Dorsolateral prefrontal cortex (tissue), 120 donors: ENCODE measurements at regions of chr6 and their contacts with region 1.

Region 1: DNA sequence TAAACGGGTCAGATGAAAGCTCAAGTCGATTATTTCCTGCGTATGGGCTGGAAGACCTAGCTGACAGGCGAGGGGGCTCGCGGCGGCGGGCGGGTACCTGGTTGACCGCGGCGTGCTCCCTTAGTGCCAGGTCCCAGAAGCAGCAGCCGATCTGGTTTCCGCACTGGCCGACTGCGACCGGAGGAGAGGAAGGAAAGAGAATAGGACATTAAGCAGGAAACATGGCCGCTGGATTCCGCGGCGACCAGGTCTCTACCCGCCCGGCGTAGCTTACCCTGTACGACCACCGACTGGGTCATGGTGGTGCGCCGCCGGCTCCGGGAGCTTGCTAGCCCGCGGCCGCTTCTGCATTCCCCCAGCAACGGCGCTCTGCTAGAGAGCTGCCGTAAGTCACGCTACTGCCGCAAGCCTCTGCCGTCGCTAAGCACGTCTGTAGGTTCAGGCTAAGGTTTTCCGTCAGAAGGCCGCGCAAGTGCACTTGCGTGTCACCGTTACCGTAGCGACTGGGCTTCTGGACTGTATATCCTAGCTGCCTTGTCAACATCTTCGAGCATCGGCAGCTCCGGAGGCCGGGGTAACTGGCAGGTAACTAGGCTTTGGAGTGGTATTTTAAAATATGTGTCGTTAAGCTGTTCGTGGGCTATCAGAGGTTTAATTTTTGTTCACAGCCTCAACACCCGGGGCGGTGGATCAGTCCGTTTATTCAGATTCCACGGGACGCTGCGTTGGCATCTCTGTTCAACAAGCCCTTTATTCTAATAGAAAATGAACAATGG is at the starts of genes FAM229B and TUBE1:
- DNase-seq: peak; percentile 82 to 98 (median 94)
- H3K4me3 ChIP-seq: peak within 1 kb of the TSS; percentile 55 to 98 (median 85)
- H3K27ac ChIP-seq: peak within 1 kb of the TSS; percentile 31 to 94 (median 87)
- H3K27me3 ChIP-seq: no peaks in the 10 kb centered on the region
- CTCF ChIP-seq: peak in 50 of 56 donors; percentile 15 to 61 (median 38)
- total RNA-seq, gene FAM229B: 33.7 to 84.2 (median 59.9) TPM
- total RNA-seq, gene TUBE1: 28.3 to 69.6 (median 48.6) TPM

Region 2: DNA sequence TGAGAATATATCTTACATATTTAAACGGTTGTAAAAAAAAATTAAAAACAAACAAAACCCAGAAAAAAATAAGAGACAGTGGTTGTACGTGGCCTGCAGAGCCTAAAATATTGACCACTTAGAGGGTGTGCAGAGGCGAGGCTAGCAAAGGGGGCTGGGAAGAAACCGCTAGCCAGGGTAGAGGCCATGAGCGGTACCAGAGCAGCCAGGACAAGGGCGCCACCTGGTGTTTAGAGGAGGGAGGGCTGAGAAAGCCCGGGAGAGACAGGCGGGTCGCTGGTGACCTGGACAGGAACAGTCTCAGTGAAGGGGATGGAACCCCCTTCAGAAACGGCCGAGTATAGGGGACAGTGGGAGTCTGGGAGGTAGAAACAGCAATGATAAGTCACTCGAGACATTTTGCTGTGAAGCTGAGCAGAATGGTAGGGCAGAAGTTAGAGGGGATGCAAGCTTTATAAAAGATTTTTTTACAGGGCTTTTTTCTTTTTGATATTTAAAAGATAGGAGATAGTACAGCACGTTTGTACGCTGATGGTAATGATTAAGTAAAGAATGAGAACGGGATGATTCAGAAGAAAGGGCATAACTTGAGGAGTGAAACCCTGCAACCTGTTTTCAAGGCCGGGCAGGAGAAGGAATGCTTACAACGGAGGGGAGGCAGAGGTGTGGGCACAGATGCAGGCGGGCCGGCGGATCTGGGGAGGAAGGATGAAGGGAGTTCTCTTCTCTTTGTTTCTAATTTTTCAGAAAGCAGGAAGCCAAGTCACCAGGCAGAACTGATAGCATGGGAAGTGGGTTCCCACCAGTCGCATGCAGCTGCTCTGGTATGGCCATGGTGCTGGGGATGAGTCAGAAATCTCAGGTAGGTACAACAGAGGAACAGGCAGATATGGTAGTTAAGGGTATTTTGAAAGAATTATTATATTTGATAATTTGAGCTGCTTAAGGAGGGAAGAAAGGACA is 76.3 kb after region 1 on chr6:
- intact Hi-C with region 1: loop called in 1 of 2 experiments (anchors 5 kb)
- DNase-seq: peak in 8 of 10 donors; percentile 36 to 67 (median 54)
- H3K4me3 ChIP-seq: no peak overlapping the region
- H3K27ac ChIP-seq: no peak overlapping the region
- H3K27me3 ChIP-seq: no peaks in the 10 kb centered on the region
- CTCF ChIP-seq: peak; percentile 30 to 87 (median 66)

Region 3: DNA sequence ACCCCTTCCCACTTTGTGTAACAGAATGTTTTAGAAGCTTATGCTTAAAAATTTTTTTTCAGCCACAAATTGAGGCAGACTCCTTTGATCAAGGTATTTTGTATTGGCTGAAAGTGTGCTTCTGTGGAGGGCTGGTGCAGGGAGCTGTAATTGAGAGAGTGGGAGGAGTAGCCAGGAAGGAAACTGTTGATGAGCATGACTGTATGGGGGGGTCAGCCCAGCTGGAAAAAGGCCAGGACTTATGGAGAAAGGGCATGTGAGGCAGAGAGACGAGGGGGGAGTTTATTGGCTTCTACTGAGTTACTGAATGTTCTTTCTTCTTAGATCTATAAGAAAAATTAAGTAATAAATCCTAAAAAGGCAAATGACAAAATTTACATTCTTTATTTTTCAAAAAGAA is 273.2 kb after region 1 on chr6:
- intact Hi-C with region 1: no loop called
- DNase-seq: no peak
- H3K4me3 ChIP-seq: no peak overlapping the region
- H3K27ac ChIP-seq: no peak overlapping the region
- H3K27me3 ChIP-seq: no peaks in the 10 kb centered on the region
- CTCF ChIP-seq: no peak

Region 4: GRCh38 chr6:112396221-112396620 is 308.9 kb after region 1 on chr6:
- intact Hi-C with region 1: no loop called
- DNase-seq: no peak
- H3K4me3 ChIP-seq: no peak overlapping the region
- H3K27ac ChIP-seq: no peak overlapping the region
- H3K27me3 ChIP-seq: no peaks in the 10 kb centered on the region
- CTCF ChIP-seq: no peak